Motor neuron (in vitro differentiated cells): ENCODE measurements at regions of chr15 and their contacts with region 1.

Region 1: GRCh38 chr15:33292717-33293307 is 18.0 kb upstream of the RYR3 start:
- ATAC-seq: peak; percentile 48 to 90 (median 75)
- H3K4me3 ChIP-seq: no peak overlapping the region
- H3K27ac ChIP-seq: no peak overlapping the region
- H3K4me1 ChIP-seq: no peaks in the 10 kb centered on the region

Region 2: DNA sequence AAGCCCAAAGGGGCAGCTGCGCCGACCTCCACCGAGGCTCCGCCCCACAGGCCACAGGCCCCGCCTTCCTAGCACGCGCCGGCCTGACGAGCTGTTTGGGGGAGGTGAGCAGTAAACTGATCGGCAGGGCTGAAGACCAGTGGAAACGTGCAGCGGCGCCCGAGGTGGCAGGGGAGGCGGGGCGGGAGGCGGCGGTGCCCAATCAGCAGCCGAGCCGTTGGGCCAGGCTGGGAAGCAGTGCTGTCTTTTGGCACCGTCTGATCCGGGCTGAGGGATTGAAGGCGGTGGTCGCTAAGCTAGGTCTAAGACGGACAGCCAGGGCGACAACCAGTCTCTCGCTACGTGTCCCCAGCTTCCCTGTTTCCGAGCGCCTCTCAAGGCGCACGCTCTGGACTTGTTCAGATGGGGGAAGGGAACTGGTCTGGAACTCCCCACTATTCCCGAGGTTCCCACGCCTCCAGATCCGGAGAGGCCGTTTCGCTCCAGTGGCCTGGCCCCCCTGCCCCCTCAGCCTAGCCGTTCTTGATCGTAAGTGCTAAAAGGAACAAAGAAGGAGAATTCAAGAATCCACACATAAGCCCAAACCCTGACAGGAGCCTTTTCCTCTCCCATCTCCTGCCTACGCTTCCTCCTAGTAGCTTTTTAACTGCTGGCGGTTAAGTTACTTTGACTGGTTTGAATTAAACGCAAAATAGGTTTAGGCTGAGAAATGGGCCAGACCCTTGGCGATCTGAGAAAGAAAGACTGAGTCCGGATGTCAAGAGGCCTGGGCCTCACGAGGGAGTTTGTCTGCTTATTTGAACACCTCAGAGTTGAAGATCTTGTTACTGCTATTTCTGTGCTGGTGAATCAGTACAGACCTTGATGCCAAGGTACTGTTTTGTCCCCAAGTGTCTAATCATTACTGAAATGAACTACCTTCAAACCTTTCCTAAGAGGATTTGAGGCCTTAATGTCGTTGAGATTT is 97.8 kb before region 1 on chr15 and contains the start of gene FMN1:
- in situ Hi-C with region 1: no loop called
- ATAC-seq: peak; percentile 98 to 99 (median 99)
- H3K4me3 ChIP-seq: peak within 1 kb of the TSS; percentile 36 to 46 (median 45)
- H3K27ac ChIP-seq: no peak within 1 kb of the TSS
- H3K4me1 ChIP-seq: peaks cover 0 to 5% of the 10 kb centered on the region in 2 donors
- total RNA-seq, gene FMN1: 0.27 to 4.2 (median 2.0) TPM

Region 3: DNA sequence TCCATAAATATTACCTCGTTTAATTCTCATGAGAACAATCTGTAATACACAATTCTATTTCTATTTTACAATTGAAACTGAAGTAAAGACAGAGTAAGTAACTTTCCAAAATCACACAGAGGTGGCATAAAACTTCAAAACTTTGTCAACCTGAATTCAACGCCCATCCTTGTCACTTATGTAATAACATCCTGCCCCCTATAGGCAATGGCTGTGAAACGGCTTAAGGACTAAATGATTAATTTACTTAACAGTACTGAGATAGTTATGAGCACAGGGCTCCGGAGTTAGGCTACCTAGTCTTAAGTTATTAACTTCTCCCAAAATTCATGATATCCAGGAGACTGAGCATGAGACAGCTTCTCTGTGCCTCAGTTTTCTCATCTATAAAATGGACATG is 382.4 kb after region 1 on chr15:
- in situ Hi-C with region 1: loop called in 1 of 9 experiments (anchors 25 kb)
- ATAC-seq: peak in 3 of 8 experiments; percentile 46 to 66 (median 47)
- H3K4me3 ChIP-seq: no peak overlapping the region
- H3K27ac ChIP-seq: no peak overlapping the region
- H3K4me1 ChIP-seq: peaks cover 14 to 15% of the 10 kb centered on the region in 2 donors